CD4-positive, alpha-beta T cell (primary cell): ENCODE measurements at regions of chrX and their contacts with region 1.

Region 1: GRCh38 chrX:140733769-140734342 is 24.3 kb downstream of the LINC00632 start:
- DNase-seq: peak in 4 of 14 experiments; percentile 11 to 35 (median 28)
- ATAC-seq: no peak
- H3K4me3 ChIP-seq: no peak overlapping the region
- H3K4me3 Mint-ChIP-seq: no peak overlapping the region
- H3K27ac ChIP-seq: no peak overlapping the region
- H3K27ac Mint-ChIP-seq: no peak overlapping the region
- H3K4me1 ChIP-seq: no peaks in the 10 kb centered on the region
- H3K4me1 Mint-ChIP-seq: no peaks in the 10 kb centered on the region
- H3K27me3 ChIP-seq: no peaks in the 10 kb centered on the region
- H3K27me3 Mint-ChIP-seq: no peaks in the 10 kb centered on the region
- CTCF ChIP-seq: peak; percentile 58

Region 2: DNA sequence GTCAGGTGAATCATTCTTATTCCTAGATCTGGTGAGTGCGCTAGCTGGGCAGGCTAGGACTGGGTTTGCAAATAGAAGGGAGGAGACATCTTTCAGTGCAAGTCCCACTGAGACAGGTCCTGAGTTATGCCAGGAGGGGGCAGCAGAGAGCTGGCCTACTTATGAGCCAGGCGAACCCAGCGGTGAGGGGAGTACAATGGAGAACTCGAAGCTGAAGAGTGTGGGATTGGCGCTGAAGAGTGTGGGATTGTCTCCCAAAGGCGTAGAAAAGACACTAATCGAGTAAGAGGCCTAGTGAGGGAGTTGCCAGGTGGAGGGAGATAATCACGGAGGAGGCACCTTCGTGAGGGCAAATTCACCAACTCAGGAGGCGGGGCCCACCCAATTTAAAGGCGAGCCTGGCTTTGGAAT is 676.9 kb before region 1 on chrX:
- CTCF ChIA-PET with region 1: no interaction called
- POLR2A ChIA-PET with region 1: no interaction called
- intact Hi-C with region 1: loop called in 1 of 2 experiments (anchors 10 kb)
- DNase-seq: peak; percentile 7 to 67 (median 38)
- ATAC-seq: no peak
- H3K4me3 ChIP-seq: no peak overlapping the region
- H3K4me3 Mint-ChIP-seq: no peak overlapping the region
- H3K27ac ChIP-seq: no peak overlapping the region
- H3K27ac Mint-ChIP-seq: no peak overlapping the region
- H3K4me1 ChIP-seq: peaks cover 3% of the 10 kb centered on the region
- H3K4me1 Mint-ChIP-seq: peaks cover 5% of the 10 kb centered on the region
- H3K27me3 ChIP-seq: no peaks in the 10 kb centered on the region
- H3K27me3 Mint-ChIP-seq: no peaks in the 10 kb centered on the region
- CTCF ChIP-seq: peak; percentile 57

Region 3: DNA sequence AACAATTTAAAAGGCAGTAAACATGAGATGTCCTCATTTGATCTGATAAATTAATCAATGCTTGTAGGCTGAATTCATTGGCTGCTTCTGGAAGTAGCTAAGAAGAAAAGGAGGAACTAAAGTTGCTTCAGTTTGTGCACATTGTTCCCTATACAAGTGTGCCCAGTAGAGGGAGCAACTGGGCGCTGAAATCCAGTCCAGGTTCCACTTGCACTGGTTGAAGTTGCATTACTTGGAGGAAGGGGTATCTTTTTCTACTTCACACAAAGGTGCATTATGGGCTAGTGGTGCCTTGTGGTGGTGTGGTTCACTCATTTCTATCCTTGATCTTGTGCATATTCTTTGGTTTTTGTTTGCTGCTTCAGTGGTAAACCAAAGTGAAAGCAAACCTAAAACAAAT is 161.1 kb before region 1 on chrX:
- CTCF ChIA-PET with region 1: no interaction called
- POLR2A ChIA-PET with region 1: no interaction called
- intact Hi-C with region 1: loop called in 1 of 2 experiments (anchors 5 kb)
- DNase-seq: peak in 2 of 14 experiments; percentile 1 to 6
- ATAC-seq: no peak
- H3K4me3 ChIP-seq: no peak overlapping the region
- H3K4me3 Mint-ChIP-seq: no peak overlapping the region
- H3K27ac ChIP-seq: no peak overlapping the region
- H3K27ac Mint-ChIP-seq: no peak overlapping the region
- H3K4me1 ChIP-seq: no peaks in the 10 kb centered on the region
- H3K4me1 Mint-ChIP-seq: no peaks in the 10 kb centered on the region
- H3K27me3 ChIP-seq: no peaks in the 10 kb centered on the region
- H3K27me3 Mint-ChIP-seq: no peaks in the 10 kb centered on the region
- CTCF ChIP-seq: peak; percentile 19

Region 4: DNA sequence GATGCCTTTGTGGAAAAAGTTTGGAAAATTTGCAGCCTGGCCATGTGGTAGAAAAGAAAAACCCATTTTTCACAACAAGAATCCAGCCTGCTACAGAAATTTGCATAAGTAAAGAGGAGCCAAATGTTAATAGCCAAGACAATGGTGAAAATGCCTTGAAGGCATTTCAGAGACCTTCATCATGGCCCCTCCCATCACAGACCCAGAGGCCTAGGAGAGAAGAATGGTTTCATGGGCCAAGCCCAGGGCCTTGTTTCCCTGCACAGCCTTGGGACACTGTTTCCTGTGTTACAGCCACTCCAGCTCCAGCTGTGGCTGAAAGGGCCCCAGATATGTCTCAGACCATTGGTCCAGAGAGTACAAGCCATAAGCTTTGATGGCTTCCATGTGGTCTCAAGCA is 125.7 kb before region 1 on chrX:
- CTCF ChIA-PET with region 1: no interaction called
- POLR2A ChIA-PET with region 1: no interaction called
- intact Hi-C with region 1: no loop called
- DNase-seq: no peak
- ATAC-seq: no peak
- H3K4me3 ChIP-seq: no peak overlapping the region
- H3K4me3 Mint-ChIP-seq: no peak overlapping the region
- H3K27ac ChIP-seq: no peak overlapping the region
- H3K27ac Mint-ChIP-seq: no peak overlapping the region
- H3K4me1 ChIP-seq: no peaks in the 10 kb centered on the region
- H3K4me1 Mint-ChIP-seq: no peaks in the 10 kb centered on the region
- H3K27me3 ChIP-seq: no peaks in the 10 kb centered on the region
- H3K27me3 Mint-ChIP-seq: no peaks in the 10 kb centered on the region
- CTCF ChIP-seq: no peak

Region 5: GRCh38 chrX:140701480-140701879 is 32.4 kb before region 1 on chrX:
- CTCF ChIA-PET with region 1: no interaction called
- POLR2A ChIA-PET with region 1: no interaction called
- intact Hi-C with region 1: loop called in 1 of 2 experiments (anchors 5 kb)
- DNase-seq: peak in 3 of 14 experiments; percentile 2 to 16 (median 6)
- ATAC-seq: no peak
- H3K4me3 ChIP-seq: no peak overlapping the region
- H3K4me3 Mint-ChIP-seq: no peak overlapping the region
- H3K27ac ChIP-seq: no peak overlapping the region
- H3K27ac Mint-ChIP-seq: no peak overlapping the region
- H3K4me1 ChIP-seq: no peaks in the 10 kb centered on the region
- H3K4me1 Mint-ChIP-seq: no peaks in the 10 kb centered on the region
- H3K27me3 ChIP-seq: no peaks in the 10 kb centered on the region
- H3K27me3 Mint-ChIP-seq: no peaks in the 10 kb centered on the region
- CTCF ChIP-seq: peak; percentile 37